WTC11 (cell line): ENCODE measurements at regions of chr3 and their contacts with region 1.

Region 1: DNA sequence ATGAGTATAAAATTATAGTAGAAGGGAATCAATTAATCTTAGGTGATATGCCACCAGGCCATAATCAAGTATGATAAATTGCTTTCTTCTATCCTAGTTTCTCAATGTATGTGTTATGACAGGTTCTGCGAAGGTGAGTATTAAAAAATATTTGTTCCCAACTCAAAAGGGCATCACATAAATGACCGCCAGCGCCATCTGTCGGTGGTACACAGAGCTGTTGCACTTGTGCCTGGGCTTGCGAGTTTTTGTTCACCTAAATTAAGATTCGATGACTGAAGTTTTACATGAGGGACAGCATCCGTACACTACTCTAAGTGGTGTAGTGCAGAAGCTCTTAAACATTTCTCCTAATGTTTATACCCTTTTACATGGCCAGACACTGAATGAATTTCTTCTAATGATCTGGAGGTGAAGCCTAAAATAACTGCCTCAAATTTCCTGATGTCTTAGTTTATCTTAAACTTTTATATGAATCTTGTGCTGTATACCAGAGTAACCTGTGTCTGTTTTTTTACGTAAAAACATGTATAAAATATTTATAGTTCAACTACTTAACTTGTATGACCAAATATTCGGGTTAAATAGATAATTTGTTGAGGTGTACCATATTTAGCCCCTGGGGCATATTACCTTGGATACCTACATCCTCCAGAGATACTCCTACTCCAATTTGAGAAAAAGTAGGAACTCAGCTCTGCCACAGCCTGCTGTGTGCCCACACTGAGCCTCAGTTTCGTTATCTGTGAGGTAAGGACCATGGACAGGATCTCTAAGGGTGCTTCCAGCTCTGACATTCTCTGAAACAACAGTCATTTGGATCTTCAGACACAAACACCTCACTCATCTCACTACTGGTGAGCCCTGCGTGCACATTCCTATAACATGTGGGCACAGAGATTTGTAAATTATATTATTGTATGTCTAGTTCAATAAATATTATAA is 365.6 kb downstream of the MAGI1 start:
- DNase-seq: peak; percentile 74
- ATAC-seq: peak; percentile 66
- H3K4me3 Mint-ChIP-seq: no peak overlapping the region
- H3K27ac Mint-ChIP-seq: no peak overlapping the region
- H3K4me1 Mint-ChIP-seq: peaks cover 36% of the 10 kb centered on the region
- H3K27me3 Mint-ChIP-seq: no peaks in the 10 kb centered on the region
- CTCF ChIP-seq: peak; percentile 85

Region 2: DNA sequence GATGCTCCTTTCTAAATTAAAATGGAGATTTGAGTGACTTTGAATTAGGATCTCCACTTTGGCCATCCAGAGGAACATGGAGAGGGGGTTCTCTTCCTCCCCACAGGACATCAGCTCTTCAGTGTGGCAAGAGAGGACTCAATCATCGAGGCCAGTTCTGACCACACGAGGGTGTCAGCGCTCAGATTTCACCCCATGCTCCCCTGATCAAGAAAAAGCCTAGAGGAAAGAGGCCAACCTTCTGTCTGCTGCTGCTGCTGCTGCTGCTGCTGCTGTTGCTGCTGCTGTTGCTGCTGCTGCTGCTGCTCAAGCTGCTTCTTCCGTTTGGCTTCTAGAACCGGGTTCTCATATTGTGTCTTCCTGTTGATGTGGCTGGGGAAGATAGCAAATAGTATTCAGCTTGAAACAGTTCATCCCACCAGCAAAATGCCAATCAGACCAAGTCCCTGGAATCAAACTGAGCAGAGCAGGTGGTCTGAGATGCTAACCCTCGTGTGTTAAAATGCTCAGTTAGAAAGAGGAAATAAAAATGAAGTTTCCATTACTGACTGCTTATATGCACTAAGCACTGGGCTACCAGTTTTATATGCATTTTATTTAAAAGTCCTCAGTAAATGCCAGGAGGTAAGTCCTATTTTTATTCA is 233.4 kb before region 1 on chr3:
- CTCF ChIA-PET with region 1: interaction called, 23 read pairs
- POLR2A ChIA-PET with region 1: no interaction called
- DNase-seq: peak; percentile 62
- ATAC-seq: peak; percentile 97
- H3K4me3 Mint-ChIP-seq: no peak overlapping the region
- H3K27ac Mint-ChIP-seq: peak overlapping the region; percentile 68
- H3K4me1 Mint-ChIP-seq: peaks cover 20% of the 10 kb centered on the region
- H3K27me3 Mint-ChIP-seq: no peaks in the 10 kb centered on the region
- CTCF ChIP-seq: peak; percentile 27; the same call in 1 of the 2 replicates

Region 3: DNA sequence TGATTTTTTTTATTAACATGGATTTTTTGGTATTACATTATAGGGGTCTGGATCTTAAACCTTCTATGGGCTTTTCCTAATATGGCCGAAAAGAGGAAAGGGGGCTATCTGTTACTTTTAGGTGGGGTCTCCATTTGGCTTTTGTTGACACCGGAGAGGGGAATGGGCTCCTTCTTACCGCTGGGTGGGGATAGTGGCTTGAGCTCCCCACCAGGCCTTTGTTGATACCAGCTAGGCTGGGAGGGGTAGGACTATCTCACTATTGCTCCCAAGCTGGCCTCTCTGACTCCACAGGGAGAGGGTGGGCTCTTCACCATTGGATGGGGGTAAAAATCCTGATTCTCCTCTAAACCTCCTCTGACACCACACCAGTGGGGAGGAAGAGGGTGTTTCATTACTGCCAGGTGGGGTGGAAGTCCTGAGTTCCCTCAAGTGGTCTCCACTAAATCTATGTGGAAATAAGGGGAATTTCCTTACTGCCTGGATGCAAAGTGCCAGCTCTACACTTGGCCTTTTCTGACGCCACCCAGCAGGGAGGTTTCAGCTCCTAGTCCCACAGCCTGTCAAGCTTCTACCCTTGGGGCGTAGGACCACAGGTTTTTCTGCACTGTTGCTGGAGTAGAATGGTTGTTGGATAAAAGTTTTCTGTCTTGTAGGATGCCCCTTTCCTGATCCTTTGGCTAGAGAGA is 206.7 kb before region 1 on chr3:
- CTCF ChIA-PET with region 1: interaction called, 20 read pairs
- POLR2A ChIA-PET with region 1: no interaction called
- DNase-seq: peak; percentile 45
- ATAC-seq: peak; percentile 100
- H3K4me3 Mint-ChIP-seq: no peak overlapping the region
- H3K27ac Mint-ChIP-seq: no peak overlapping the region
- H3K4me1 Mint-ChIP-seq: peaks cover 23% of the 10 kb centered on the region
- H3K27me3 Mint-ChIP-seq: no peaks in the 10 kb centered on the region
- CTCF ChIP-seq: no peak

Region 4: DNA sequence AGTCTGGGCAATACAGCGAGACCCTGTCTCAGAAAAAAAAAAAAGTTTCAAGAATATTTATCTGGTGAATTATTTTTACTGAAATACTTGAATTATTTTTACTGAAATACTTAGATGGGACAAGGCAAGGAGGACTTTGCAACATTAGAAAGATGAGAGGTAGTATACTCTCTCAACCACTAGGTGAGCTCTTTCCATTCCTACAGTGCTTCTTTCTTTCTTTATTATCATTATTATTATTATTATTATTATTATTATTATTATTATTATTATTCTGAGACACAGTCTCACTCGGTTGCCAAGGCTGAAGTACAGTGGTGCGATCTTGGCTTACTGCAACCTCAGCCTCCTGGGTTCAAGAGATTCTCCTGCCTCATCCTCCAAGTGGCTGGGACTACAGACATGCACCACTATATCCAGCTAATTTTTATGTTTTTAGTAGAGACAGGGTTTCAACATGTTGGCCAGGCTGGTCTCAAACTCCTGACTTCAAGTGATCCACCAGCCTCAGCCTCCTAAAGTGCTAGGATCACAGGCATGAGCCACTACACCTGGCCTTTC is 103.2 kb before region 1 on chr3:
- CTCF ChIA-PET with region 1: interaction called, 13 read pairs
- POLR2A ChIA-PET with region 1: interaction called, 3 read pairs
- DNase-seq: no peak
- ATAC-seq: no peak
- H3K4me3 Mint-ChIP-seq: no peak overlapping the region
- H3K27ac Mint-ChIP-seq: no peak overlapping the region
- H3K4me1 Mint-ChIP-seq: peaks cover 3% of the 10 kb centered on the region
- H3K27me3 Mint-ChIP-seq: no peaks in the 10 kb centered on the region
- CTCF ChIP-seq: peak; percentile 44; the same call in 1 of the 2 replicates

Region 5: GRCh38 chr3:65597226-65597951 is 75.8 kb before region 1 on chr3:
- CTCF ChIA-PET with region 1: interaction called, 10 read pairs
- POLR2A ChIA-PET with region 1: no interaction called
- DNase-seq: peak; percentile 82
- ATAC-seq: peak; percentile 75
- H3K4me3 Mint-ChIP-seq: peak overlapping the region; percentile 85
- H3K27ac Mint-ChIP-seq: peak overlapping the region; percentile 96
- H3K4me1 Mint-ChIP-seq: peaks cover 58% of the 10 kb centered on the region
- H3K27me3 Mint-ChIP-seq: peaks cover 3% of the 10 kb centered on the region; the same call in 1 of the 2 replicates
- CTCF ChIP-seq: no peak

Region 6: DNA sequence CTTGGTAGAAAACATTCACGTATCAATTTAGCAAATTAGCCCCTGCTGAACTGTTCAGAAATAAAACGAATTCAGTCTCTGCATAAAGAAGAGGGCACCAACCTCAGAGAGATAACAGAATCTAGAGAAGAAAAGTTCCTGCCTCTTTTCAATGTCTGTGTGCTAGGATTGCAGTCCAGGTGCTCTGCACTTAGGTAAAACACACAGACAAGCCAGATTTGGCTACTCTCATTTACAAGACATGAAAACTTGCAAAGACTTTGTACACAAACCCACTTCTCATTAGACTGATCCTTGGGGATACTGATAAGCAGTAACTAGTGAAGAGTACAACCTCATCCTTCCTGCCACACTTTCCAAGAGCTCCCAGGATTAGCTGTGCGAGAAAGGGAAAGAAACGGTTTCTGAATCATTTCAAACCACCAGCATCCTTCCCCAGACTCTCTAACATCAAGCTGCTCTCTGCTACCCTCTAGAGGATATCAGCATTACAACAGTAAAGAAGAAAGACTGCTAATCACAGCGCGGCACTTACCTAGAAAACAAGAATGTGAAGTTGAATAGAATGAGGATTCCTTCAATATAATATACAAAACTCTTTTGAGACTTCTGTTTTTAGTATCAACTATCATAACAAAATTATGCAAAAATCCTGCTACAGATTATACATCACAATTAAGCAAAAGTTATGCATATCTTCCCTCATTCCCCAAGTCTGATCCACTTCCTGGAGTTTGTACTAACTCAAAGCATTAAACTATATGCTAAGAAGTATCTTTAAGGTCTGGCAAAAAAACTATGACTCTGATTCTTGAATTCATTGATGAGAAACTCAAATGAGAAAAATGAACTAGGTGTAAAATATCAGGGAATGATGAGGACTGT is 59.1 kb after region 1 on chr3:
- CTCF ChIA-PET with region 1: interaction called, 11 read pairs
- POLR2A ChIA-PET with region 1: no interaction called
- DNase-seq: no peak
- ATAC-seq: peak; percentile 86
- H3K4me3 Mint-ChIP-seq: no peak overlapping the region
- H3K27ac Mint-ChIP-seq: peak overlapping the region; percentile 51; the same call in 1 of the 2 replicates
- H3K4me1 Mint-ChIP-seq: peaks cover 54% of the 10 kb centered on the region
- H3K27me3 Mint-ChIP-seq: no peaks in the 10 kb centered on the region
- CTCF ChIP-seq: peak; percentile 40; the same call in 1 of the 2 replicates